GM12878 (cell line): ENCODE measurements at regions of chr19 and their contacts with region 1.

Region 1: GRCh38 chr19:16778796-16779411 is 50.3 kb upstream of the SIN3B start:
- DNase-seq: peak; percentile 26
- ATAC-seq: peak; percentile 86
- H3K4me3 ChIP-seq: no peak overlapping the region
- H3K27ac ChIP-seq: no peak overlapping the region
- H3K4me1 ChIP-seq: no peaks in the 10 kb centered on the region
- H3K27me3 ChIP-seq: no peaks in the 10 kb centered on the region
- CTCF ChIP-seq: peak; percentile 71 to 75 (median 74)
- EP300 ChIP-seq: no peak
- POLR2A ChIP-seq: no peak
- RAD21 ChIP-seq: peak; percentile 83

Region 2: DNA sequence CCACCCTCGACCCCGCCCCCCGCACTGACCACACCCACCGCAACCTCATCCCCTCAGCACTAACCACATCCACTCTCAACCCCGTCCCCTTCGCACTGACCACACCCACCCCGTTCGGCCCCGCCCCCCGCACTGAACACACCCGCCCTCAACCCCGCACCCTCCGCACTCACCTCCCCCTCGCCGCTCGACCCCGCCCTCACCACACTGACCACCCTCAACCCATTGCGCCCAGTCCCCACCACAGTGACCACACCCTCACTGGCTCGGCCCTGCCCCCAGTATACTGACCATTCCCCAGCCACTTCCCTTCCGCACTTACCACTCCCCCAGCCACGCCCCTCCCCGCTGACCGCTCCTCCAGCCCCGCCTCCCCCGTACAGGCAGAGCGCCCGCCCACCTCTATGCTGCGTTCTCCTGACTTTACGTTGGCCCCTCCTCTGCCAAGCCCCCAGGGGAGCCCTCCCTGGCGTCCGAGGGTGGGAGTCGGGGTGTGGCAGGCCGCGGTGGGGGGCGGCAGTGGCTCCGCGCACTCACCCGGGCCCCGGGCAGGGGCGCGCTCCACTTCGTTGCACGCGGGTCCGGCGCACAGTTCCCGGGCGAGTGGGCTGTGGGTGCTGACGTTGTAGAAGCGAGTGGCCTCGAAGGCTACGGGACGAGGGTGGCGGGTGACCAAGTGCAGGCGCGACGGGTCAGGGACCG is 118.4 kb after region 1 on chr19:
- CTCF ChIA-PET with region 1: interaction called, 5 read pairs
- POLR2A ChIA-PET with region 1: no interaction called
- RAD21 ChIA-PET with region 1: interaction called, 6 read pairs
- SMC1A ChIA-PET with region 1: no interaction called
- in situ Hi-C with region 1: loop called (anchors 5 kb)
- intact Hi-C with region 1: loop called (anchors 1 kb)
- DNase-seq: peak; percentile 60
- ATAC-seq: peak; percentile 85
- H3K4me3 ChIP-seq: peak overlapping the region; percentile 90
- H3K27ac ChIP-seq: peak overlapping the region; percentile 7; the same call in 1 of the 2 replicates
- H3K4me1 ChIP-seq: peaks cover 44% of the 10 kb centered on the region
- H3K27me3 ChIP-seq: no peaks in the 10 kb centered on the region
- CTCF ChIP-seq: no peak
- EP300 ChIP-seq: no peak
- POLR2A ChIP-seq: peak; percentile 28; the same call in 1 of the 2 replicates
- RAD21 ChIP-seq: no peak

Region 3: GRCh38 chr19:16969127-16969526 is 190.2 kb after region 1 on chr19:
- CTCF ChIA-PET with region 1: no interaction called
- POLR2A ChIA-PET with region 1: no interaction called
- RAD21 ChIA-PET with region 1: no interaction called
- SMC1A ChIA-PET with region 1: no interaction called
- in situ Hi-C with region 1: no loop called
- intact Hi-C with region 1: loop called (anchors 2 kb)
- DNase-seq: no peak
- ATAC-seq: peak; percentile 63
- H3K4me3 ChIP-seq: no peak overlapping the region
- H3K27ac ChIP-seq: no peak overlapping the region
- H3K4me1 ChIP-seq: no peaks in the 10 kb centered on the region
- H3K27me3 ChIP-seq: no peaks in the 10 kb centered on the region
- CTCF ChIP-seq: peak; percentile 20 to 24 (median 23); a peak in 2 of 6 replicates
- EP300 ChIP-seq: no peak
- POLR2A ChIP-seq: no peak
- RAD21 ChIP-seq: 0 out of 2 replicates have a peak, but pooled peaks have one; percentile 28

Region 4: DNA sequence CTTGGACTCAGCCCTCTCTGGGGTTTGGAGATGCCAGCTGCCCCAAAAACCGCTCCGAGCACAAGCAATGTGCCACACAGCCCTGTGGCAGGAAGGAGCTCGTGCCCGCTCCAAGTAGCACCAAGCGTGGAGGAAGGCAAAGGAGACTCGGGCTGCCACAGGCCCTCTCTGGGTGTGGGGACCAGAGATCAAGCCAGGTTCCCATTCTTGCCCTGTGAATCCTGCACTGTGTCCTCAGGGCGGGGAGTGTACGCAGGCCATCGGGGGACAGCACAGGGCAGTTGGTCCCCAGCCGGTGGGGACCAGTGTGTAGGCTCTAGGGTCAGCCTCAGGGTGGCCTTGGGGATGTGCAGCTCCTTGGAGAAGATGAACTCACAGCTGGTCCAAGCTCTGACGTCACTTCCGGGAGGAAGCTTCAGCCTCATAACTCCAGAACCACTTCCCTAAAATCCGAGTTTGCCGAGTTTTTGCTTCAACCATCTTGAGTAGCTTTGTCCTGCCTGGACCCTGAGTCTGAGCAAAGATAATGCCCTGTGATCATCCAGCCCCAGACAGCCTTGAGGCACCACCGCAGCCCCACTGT is 257.0 kb after region 1 on chr19:
- CTCF ChIA-PET with region 1: no interaction called
- POLR2A ChIA-PET with region 1: interaction called, 11 read pairs
- RAD21 ChIA-PET with region 1: no interaction called
- SMC1A ChIA-PET with region 1: no interaction called
- in situ Hi-C with region 1: no loop called
- intact Hi-C with region 1: no loop called
- DNase-seq: no peak
- ATAC-seq: no peak
- H3K4me3 ChIP-seq: no peak overlapping the region
- H3K27ac ChIP-seq: no peak overlapping the region
- H3K4me1 ChIP-seq: no peaks in the 10 kb centered on the region
- H3K27me3 ChIP-seq: no peaks in the 10 kb centered on the region
- CTCF ChIP-seq: no peak
- EP300 ChIP-seq: no peak
- POLR2A ChIP-seq: no peak
- RAD21 ChIP-seq: no peak

Region 5: DNA sequence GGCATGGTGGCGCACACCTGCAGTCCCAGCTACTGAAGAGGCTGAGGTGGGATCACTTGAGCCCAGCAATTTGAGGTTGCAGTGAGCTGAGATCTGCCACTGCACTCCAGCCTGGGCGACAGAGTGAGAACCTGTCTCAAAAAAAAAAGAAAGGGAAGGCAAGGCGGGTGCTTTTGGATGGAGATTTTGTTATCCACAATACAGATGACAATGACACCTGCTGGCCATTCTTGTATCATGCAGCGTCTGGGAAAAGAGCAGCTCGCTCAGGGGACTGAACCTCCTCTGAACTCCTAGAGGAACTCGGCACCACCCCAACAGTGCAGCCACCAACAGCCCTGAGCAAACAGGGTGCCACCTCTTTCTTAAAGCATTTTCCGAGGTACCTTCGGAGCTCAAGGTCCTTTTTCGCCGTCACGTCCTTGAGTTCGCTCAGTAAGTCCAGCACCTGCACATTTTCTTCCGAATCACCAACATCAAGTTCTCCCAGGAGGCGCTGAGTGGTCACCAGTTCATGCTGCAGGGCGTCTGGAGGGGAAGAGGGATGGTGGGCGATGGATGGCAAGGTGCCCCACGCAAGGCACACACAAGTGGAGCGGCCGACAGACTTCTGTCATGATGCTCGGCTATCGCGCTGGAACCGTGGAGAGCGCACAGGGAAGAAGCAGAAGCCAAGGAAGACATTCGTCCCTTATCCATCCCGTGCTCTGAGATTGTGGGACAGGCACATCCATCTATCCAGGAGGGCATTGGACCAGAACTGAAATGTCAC is 273.7 kb after region 1 on chr19:
- CTCF ChIA-PET with region 1: interaction called, 5 read pairs
- POLR2A ChIA-PET with region 1: no interaction called
- RAD21 ChIA-PET with region 1: interaction called, 3 read pairs
- SMC1A ChIA-PET with region 1: interaction called, 7 read pairs
- in situ Hi-C with region 1: no loop called
- intact Hi-C with region 1: loop called (anchors 2 kb)
- DNase-seq: no peak
- ATAC-seq: peak; percentile 59; the same call in 2 of the 3 replicates
- H3K4me3 ChIP-seq: no peak overlapping the region
- H3K27ac ChIP-seq: no peak overlapping the region
- H3K4me1 ChIP-seq: no peaks in the 10 kb centered on the region
- H3K27me3 ChIP-seq: no peaks in the 10 kb centered on the region
- CTCF ChIP-seq: peak; percentile 40 to 52 (median 40); a peak in 5 of 6 replicates
- EP300 ChIP-seq: no peak
- POLR2A ChIP-seq: no peak
- RAD21 ChIP-seq: peak; percentile 47